ENCODE measurements at regions of chr6 and their contacts with region 1.

Region 1: DNA sequence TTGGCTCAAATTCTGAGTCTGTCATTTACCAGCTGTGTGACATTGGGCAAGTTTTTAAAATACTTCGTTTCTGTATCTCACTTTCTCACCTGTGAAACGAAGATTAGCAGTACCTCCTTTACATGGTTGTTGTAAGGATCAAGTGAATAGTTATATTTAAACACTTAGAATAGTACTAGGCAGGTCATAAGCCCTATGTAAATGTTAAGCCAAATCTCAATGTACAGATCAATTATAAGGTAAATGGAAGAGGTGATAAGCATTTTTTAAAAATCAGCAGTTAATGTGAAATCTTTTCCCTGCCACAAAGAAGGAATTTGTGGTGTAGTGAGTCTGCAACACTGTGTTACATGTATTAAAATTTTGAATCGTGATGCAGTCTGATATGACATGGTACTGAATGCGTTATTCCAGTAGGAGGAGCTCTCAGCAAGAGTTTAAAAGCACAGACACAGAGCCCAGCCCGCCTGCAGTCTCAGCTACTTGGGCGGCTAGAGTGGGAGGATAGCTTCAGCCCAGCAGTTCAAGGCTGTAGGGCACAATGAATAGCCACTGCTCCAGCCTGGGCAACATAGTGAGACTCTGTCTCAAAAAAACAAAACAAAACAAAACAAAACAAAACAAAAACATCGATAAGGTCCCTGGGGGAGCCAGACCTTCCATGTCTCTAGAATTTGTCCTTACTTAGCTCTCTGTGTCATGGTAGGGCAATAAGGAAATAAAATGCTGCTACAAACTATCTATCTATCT is 46.0 kb downstream of the GTF2H5 start:
- DNase-seq: peak; percentile 54 to 69
- ATAC-seq: peak; percentile 96

Region 2: GRCh38 chr6:158095671-158096070 is 118.4 kb before region 1 on chr6:
- intact Hi-C with region 1: no loop called
- DNase-seq: no peak
- ATAC-seq: no peak

Region 3: GRCh38 chr6:158143700-158144099 is 70.4 kb before region 1 on chr6:
- intact Hi-C with region 1: no loop called
- DNase-seq: no peak
- ATAC-seq: peak; percentile 38

Region 4: GRCh38 chr6:158329531-158329930 is 115.4 kb after region 1 on chr6:
- intact Hi-C with region 1: no loop called
- DNase-seq: no peak
- ATAC-seq: no peak

Region 5: GRCh38 chr6:158605266-158605878 is 391.3 kb after region 1 on chr6:
- intact Hi-C with region 1: loop called (anchors 10 kb)
- DNase-seq: peak in 1 of 2 donors; percentile 73
- ATAC-seq: peak; percentile 92

Region 6: GRCh38 chr6:158697811-158698210 is 483.7 kb after region 1 on chr6:
- intact Hi-C with region 1: loop called in 1 of 2 experiments (anchors 10 kb)
- DNase-seq: no peak
- ATAC-seq: no peak